ENCODE measurements at regions of chrX and their contacts with region 1.

Region 1: DNA sequence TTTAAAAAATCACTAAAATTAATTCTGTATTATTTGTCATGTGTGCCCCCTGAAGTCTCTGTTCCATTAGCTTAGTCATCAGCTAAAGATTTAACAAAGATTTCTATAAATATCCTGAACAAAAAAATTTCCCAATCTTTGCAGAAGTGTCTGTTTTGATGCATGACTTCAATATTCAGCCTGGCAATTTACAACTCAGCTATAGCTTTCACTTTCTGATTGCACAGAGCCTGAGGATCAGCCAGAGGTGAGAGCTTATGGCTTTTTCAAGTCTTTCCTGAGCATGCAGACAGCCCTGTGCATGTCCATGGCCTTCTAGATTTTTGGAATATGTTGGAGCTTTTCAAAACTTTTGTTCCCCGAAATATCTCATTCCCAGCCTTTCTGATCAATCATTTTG is 420.1 kb downstream of the ZNF674 start:
- DNase-seq: peak; percentile 2
- H3K4me3 ChIP-seq: no peak overlapping the region
- H3K27ac ChIP-seq: no peak overlapping the region
- H3K4me1 ChIP-seq: no peaks in the 10 kb centered on the region; the same call in 1 of the 2 replicates
- H3K27me3 ChIP-seq: no peaks in the 10 kb centered on the region

Region 2: GRCh38 chrX:46029777-46030176 is 95.3 kb before region 1 on chrX:
- in situ Hi-C with region 1: loop called (anchors 25 kb)
- DNase-seq: no peak
- H3K4me3 ChIP-seq: no peak overlapping the region
- H3K27ac ChIP-seq: no peak overlapping the region
- H3K4me1 ChIP-seq: no peaks in the 10 kb centered on the region
- H3K27me3 ChIP-seq: no peaks in the 10 kb centered on the region

Region 3: GRCh38 chrX:46251755-46252154 is 126.6 kb after region 1 on chrX:
- in situ Hi-C with region 1: no loop called
- DNase-seq: peak; percentile 10
- H3K4me3 ChIP-seq: no peak overlapping the region
- H3K27ac ChIP-seq: no peak overlapping the region
- H3K4me1 ChIP-seq: peaks cover 16% of the 10 kb centered on the region
- H3K27me3 ChIP-seq: no peaks in the 10 kb centered on the region

Region 4: DNA sequence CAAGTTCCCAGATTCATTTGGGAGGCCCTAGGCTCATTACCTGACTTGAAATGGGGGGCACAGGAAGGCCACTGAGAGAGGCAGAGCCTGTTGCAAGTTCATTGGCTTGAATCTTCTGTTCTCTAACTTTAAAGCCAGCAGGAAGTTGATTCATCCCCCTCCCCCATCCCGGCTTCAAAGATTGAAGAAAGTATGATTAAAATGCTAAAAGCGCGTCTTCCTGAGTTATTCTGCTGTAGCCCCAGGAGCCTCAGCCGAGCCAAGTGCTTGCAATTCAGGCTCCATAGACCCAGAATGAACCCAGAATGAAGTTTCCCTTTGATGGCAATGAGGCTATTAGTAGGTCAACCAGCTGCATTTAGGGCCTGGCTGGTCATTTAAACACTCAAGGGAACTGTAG is 463.2 kb after region 1 on chrX:
- in situ Hi-C with region 1: no loop called
- DNase-seq: peak; percentile 66
- H3K4me3 ChIP-seq: peak overlapping the region; percentile 37; the same call in 1 of the 2 replicates
- H3K27ac ChIP-seq: peak overlapping the region; percentile 59
- H3K4me1 ChIP-seq: peaks cover 43% of the 10 kb centered on the region
- H3K27me3 ChIP-seq: no peaks in the 10 kb centered on the region